Activated CD4-positive, alpha-beta T cell treated with anti-CD3 and anti-CD28 coated beads for 36 hours (primary cell): ENCODE measurements at regions of chr1 and their contacts with region 1.

Region 1: GRCh38 chr1:8314346-8315280 is 3.3 kb upstream of the SLC45A1 start:
- DNase-seq: peak; percentile 73
- ATAC-seq: peak; percentile 51
- H3K4me3 Mint-ChIP-seq: no peak overlapping the region
- H3K27ac Mint-ChIP-seq: no peak overlapping the region
- H3K4me1 Mint-ChIP-seq: peaks cover 12% of the 10 kb centered on the region
- H3K27me3 Mint-ChIP-seq: peaks cover 27% of the 10 kb centered on the region

Region 2: DNA sequence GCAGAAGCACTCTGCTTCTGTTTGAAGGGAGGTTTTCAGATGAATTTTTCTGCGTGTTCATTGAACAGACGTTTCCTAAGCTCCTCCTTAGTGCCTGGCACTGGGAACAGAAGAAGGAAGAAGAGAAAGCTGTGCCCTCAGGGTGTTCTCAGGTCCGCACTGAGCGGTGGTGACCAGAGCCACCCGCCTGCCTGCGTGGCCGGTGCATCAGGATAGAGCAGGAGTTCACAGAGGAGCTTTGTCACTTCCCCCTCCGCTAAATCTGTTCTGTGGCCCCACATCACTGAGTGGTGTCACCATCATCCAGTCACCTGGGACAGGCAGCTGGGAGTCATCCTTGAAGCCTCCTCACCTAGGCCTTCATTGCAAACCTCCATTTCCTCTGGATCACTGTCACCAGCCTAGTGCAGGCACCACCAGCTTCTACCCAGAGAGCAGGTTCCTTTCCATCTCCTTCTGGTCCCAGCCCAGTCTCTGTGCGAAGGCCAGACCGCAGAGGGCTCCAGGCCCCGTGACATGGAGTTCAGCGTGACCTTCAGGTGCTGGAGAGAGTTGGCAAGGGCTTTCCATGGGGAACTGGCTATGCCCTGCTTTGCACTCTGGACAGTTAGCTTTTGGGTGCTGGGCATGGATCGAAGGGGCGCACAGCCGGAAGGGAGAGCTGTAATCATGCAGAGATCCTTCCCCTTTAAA is 331.4 kb before region 1 on chr1:
- CTCF ChIA-PET with region 1: interaction called, 5 read pairs
- POLR2A ChIA-PET with region 1: no interaction called
- intact Hi-C with region 1: loop called in 1 of 2 experiments (anchors 1 kb)
- DNase-seq: no peak
- ATAC-seq: no peak
- H3K4me3 Mint-ChIP-seq: no peak overlapping the region
- H3K27ac Mint-ChIP-seq: no peak overlapping the region
- H3K4me1 Mint-ChIP-seq: peaks cover 5% of the 10 kb centered on the region
- H3K27me3 Mint-ChIP-seq: no peaks in the 10 kb centered on the region